K562 (cell line): ENCODE measurements at regions of chr1 and their contacts with region 1.

Region 1: DNA sequence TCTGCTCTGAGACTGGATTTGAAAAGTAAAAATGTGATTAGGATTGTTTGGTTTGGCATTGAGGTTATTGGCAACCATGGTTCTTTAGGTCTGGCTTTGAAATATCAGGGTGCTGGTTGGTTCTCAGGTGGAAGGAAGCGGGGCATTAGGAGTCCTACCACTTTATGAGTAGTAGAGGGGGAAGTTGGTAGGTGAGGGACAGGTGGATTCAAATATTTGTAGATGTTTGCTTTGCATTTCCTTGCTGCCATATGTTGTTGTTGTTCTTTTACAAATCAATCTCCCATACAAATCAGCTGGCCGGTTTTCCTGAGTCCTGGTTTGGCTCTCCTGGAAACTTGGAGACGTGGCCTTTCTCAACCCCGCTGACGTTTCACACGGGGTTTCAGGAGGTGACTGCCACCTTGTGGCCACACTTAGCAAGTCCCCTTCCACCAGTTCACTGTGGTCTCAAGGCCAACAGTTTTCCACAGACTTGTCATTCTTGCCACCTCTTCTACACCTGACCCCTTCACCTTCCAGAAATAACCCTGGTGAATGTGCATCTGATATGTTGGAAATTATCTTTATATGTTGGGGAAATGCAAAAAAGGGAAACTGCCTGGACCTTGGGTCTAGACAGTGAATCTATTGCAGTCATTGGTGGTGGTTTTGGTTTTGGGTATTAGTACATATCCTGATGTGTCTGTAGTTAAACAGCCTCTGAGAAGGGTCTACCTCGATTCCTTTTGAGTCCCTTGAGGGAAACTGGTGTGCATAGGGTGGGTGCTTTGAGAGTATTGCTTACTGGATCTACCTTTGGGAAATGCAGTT is 127.0 kb upstream of the KIAA0040 start:
- DNase-seq: peak; percentile 79 to 88 (median 82)
- ATAC-seq: peak; percentile 97
- H3K4me3 ChIP-seq: no peak overlapping the region
- H3K27ac ChIP-seq: no peak overlapping the region
- H3K4me1 ChIP-seq: no peaks in the 10 kb centered on the region
- H3K27me3 ChIP-seq: peaks cover 6 to 22% of the 10 kb centered on the region in 2 experiments; a peak in 3 of 5 replicates
- CTCF ChIP-seq: peak; percentile 84 to 96 (median 94)
- EP300 ChIP-seq: no peak
- POLR2A ChIP-seq: no peak
- RAD21 ChIP-seq: peak; percentile 95 to 97

Region 2: GRCh38 chr1:175146529-175147213 is 173.0 kb before region 1 on chr1:
- CTCF ChIA-PET with region 1: interaction called, 39 read pairs
- POLR2A ChIA-PET with region 1: interaction called, 5 read pairs
- in situ Hi-C with region 1: loop called (anchors 5 kb)
- intact Hi-C with region 1: no loop called
- DNase-seq: peak; percentile 83 to 89 (median 86)
- ATAC-seq: peak; percentile 98
- H3K4me3 ChIP-seq: no peak overlapping the region
- H3K27ac ChIP-seq: no peak overlapping the region
- H3K4me1 ChIP-seq: peaks cover 0 to 5% of the 10 kb centered on the region in 2 experiments; a peak in 1 of 5 replicates
- H3K27me3 ChIP-seq: peaks cover 15 to 55% of the 10 kb centered on the region in 2 experiments
- CTCF ChIP-seq: peak; percentile 88 to 95 (median 89)
- EP300 ChIP-seq: no peak
- POLR2A ChIP-seq: no peak
- RAD21 ChIP-seq: peak; percentile 46 to 61

Region 3: GRCh38 chr1:175394739-175395138 is 75.1 kb after region 1 on chr1:
- CTCF ChIA-PET with region 1: no interaction called
- POLR2A ChIA-PET with region 1: no interaction called
- in situ Hi-C with region 1: no loop called
- intact Hi-C with region 1: no loop called
- DNase-seq: no peak
- ATAC-seq: no peak
- H3K4me3 ChIP-seq: no peak overlapping the region
- H3K27ac ChIP-seq: no peak overlapping the region
- H3K4me1 ChIP-seq: no peaks in the 10 kb centered on the region
- H3K27me3 ChIP-seq: peaks cover 0 to 8% of the 10 kb centered on the region in 2 experiments; a peak in 4 of 5 replicates
- CTCF ChIP-seq: no peak
- EP300 ChIP-seq: no peak
- POLR2A ChIP-seq: no peak
- RAD21 ChIP-seq: no peak